GM12878 (cell line): ENCODE measurements at regions of chr2 and their contacts with region 1.

Region 1: GRCh38 chr2:177332041-177332991 is 60.3 kb upstream of the AGPS start:
- DNase-seq: peak; percentile 45
- ATAC-seq: peak; percentile 92
- H3K4me3 ChIP-seq: no peak overlapping the region
- H3K27ac ChIP-seq: no peak overlapping the region
- H3K4me1 ChIP-seq: no peaks in the 10 kb centered on the region
- H3K27me3 ChIP-seq: no peaks in the 10 kb centered on the region
- CTCF ChIP-seq: peak; percentile 55 to 79 (median 62)
- EP300 ChIP-seq: no peak
- POLR2A ChIP-seq: no peak
- RAD21 ChIP-seq: peak; percentile 90

Region 2: GRCh38 chr2:176140513-176141317 is 1191.6 kb before region 1 on chr2:
- CTCF ChIA-PET with region 1: no interaction called
- POLR2A ChIA-PET with region 1: no interaction called
- RAD21 ChIA-PET with region 1: no interaction called
- SMC1A ChIA-PET with region 1: no interaction called
- in situ Hi-C with region 1: loop called (anchors 25 kb)
- intact Hi-C with region 1: no loop called
- DNase-seq: peak; percentile 24
- ATAC-seq: peak; percentile 99
- H3K4me3 ChIP-seq: peak overlapping the region; percentile 37; the same call in 1 of the 2 replicates
- H3K27ac ChIP-seq: no peak overlapping the region
- H3K4me1 ChIP-seq: no peaks in the 10 kb centered on the region
- H3K27me3 ChIP-seq: peaks cover 0 to 11% of the 10 kb centered on the region in 2 experiments
- CTCF ChIP-seq: peak; percentile 75 to 93 (median 92)
- EP300 ChIP-seq: no peak
- POLR2A ChIP-seq: no peak; the same call in 1 of the 2 replicates
- RAD21 ChIP-seq: peak; percentile 95

Region 3: GRCh38 chr2:177263451-177264208 is 68.7 kb before region 1 on chr2:
- CTCF ChIA-PET with region 1: interaction called, 18 read pairs
- POLR2A ChIA-PET with region 1: interaction called, 10 read pairs
- RAD21 ChIA-PET with region 1: interaction called, 9 read pairs
- SMC1A ChIA-PET with region 1: interaction called, 5 read pairs
- in situ Hi-C with region 1: no loop called
- intact Hi-C with region 1: loop called (anchors 1 kb)
- DNase-seq: peak; percentile 71
- ATAC-seq: peak; percentile 74
- H3K4me3 ChIP-seq: peak overlapping the region; percentile 72
- H3K27ac ChIP-seq: peak overlapping the region; percentile 99
- H3K4me1 ChIP-seq: peaks cover 12% of the 10 kb centered on the region
- H3K27me3 ChIP-seq: no peaks in the 10 kb centered on the region
- CTCF ChIP-seq: peak; percentile 85 to 96 (median 86); a peak in 5 of 6 replicates
- EP300 ChIP-seq: peak; percentile 90 to 93
- POLR2A ChIP-seq: peak; percentile 81
- RAD21 ChIP-seq: peak; percentile 62

Region 4: DNA sequence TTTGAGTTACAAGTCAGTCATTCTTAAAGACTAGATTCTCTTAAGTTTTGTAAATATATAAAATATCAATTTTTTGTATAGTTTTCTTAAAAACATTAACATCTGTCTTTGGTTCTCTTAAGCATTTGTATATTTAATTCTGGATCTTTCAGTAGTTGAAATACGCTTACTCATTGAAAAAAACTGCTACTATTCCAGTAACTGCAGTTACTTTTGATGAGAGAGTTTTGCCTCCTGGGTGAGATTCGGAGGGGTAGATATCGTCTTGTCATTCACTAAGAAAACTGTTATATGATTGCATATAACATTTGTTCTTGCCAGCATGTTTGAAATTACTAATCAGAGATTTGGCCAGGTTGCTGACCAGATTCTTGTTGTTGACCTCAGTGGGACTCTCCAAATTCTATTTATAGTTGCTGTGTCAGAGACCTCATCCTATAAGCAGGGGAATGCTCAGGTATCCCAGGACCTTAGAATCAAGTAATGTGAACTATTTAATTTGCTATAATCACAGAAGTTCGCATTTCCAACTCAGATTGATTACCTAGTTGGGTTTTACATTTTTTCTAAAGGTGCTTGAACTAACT is 68.1 kb after region 1 on chr2:
- CTCF ChIA-PET with region 1: interaction called, 6 read pairs
- POLR2A ChIA-PET with region 1: no interaction called
- RAD21 ChIA-PET with region 1: interaction called, 8 read pairs
- SMC1A ChIA-PET with region 1: interaction called, 10 read pairs
- in situ Hi-C with region 1: no loop called
- intact Hi-C with region 1: no loop called
- DNase-seq: no peak
- ATAC-seq: peak; percentile 29
- H3K4me3 ChIP-seq: no peak overlapping the region
- H3K27ac ChIP-seq: no peak overlapping the region
- H3K4me1 ChIP-seq: peaks cover 9% of the 10 kb centered on the region
- H3K27me3 ChIP-seq: no peaks in the 10 kb centered on the region
- CTCF ChIP-seq: no peak
- EP300 ChIP-seq: no peak
- POLR2A ChIP-seq: no peak
- RAD21 ChIP-seq: no peak

Region 5: DNA sequence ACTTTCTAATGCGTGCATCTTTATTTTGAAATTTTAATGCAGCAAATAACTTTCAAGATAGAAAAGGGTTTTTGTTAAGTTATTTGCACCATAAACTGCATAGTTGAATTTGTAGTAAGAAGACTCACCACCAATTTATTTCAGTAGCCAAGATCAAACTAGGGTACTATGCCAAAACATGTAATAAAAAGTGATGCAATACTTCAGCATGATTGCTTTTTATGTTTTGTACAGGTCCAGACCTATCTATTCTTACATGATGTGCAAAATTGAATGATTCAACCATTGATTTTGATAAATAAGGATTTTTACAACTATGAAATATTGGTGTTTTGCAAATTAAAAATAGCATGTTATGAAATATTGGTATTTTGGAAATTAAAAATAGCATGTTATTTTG is 87.0 kb after region 1 on chr2:
- CTCF ChIA-PET with region 1: interaction called, 273 read pairs
- POLR2A ChIA-PET with region 1: no interaction called
- RAD21 ChIA-PET with region 1: interaction called, 100 read pairs
- SMC1A ChIA-PET with region 1: interaction called, 208 read pairs
- in situ Hi-C with region 1: loop called (anchors 5 kb)
- intact Hi-C with region 1: loop called (anchors 1 kb)
- DNase-seq: no peak
- ATAC-seq: no peak
- H3K4me3 ChIP-seq: no peak overlapping the region
- H3K27ac ChIP-seq: no peak overlapping the region
- H3K4me1 ChIP-seq: no peaks in the 10 kb centered on the region
- H3K27me3 ChIP-seq: no peaks in the 10 kb centered on the region
- CTCF ChIP-seq: no peak
- EP300 ChIP-seq: no peak
- POLR2A ChIP-seq: no peak
- RAD21 ChIP-seq: no peak

Region 6: DNA sequence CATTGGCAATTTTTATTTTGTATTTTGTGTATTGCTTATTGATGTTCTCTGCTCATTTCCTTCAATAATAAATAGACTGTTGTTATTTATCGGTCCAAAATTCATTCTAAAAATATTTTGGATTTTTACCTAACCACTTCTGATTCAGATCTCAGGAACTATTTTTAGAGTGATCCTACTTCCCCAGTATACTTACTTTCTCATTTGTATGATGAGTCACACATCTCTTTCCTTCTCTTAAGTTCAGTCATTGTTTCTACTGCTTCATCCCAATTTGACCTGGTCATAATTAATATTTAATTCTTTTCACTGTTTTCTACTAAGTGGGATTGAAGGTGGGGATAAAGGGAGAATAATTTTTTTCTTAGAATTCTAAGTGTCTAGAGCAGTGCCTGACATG is 135.3 kb after region 1 on chr2:
- CTCF ChIA-PET with region 1: no interaction called
- POLR2A ChIA-PET with region 1: no interaction called
- RAD21 ChIA-PET with region 1: no interaction called
- SMC1A ChIA-PET with region 1: no interaction called
- in situ Hi-C with region 1: no loop called
- intact Hi-C with region 1: no loop called
- DNase-seq: no peak
- ATAC-seq: no peak
- H3K4me3 ChIP-seq: no peak overlapping the region
- H3K27ac ChIP-seq: no peak overlapping the region
- H3K4me1 ChIP-seq: no peaks in the 10 kb centered on the region
- H3K27me3 ChIP-seq: no peaks in the 10 kb centered on the region
- CTCF ChIP-seq: no peak
- EP300 ChIP-seq: no peak
- POLR2A ChIP-seq: no peak
- RAD21 ChIP-seq: no peak

Region 7: DNA sequence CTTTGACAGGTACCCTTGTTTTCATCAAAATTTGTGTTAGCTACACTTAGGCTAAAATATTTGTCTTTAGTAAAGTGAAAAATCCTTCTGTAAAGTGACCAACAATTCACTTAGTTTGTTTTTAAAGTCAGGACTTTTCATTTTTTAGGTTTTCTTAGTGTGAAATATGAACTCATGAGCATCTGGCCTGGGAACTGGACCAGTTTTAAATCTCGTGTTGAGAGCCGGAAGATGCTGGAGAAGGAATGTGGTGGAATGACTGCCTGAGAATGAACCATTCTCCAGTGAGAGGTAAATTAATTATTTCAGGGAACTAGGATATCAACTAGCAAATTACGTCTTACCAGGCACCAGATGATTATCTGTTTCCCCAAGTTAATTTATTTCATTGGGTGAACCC is 366.0 kb after region 1 on chr2:
- CTCF ChIA-PET with region 1: no interaction called
- POLR2A ChIA-PET with region 1: no interaction called
- RAD21 ChIA-PET with region 1: no interaction called
- SMC1A ChIA-PET with region 1: no interaction called
- in situ Hi-C with region 1: no loop called
- intact Hi-C with region 1: no loop called
- DNase-seq: no peak
- ATAC-seq: no peak
- H3K4me3 ChIP-seq: no peak overlapping the region
- H3K27ac ChIP-seq: no peak overlapping the region
- H3K4me1 ChIP-seq: no peaks in the 10 kb centered on the region
- H3K27me3 ChIP-seq: no peaks in the 10 kb centered on the region
- CTCF ChIP-seq: no peak
- EP300 ChIP-seq: no peak
- POLR2A ChIP-seq: no peak
- RAD21 ChIP-seq: no peak

Region 8: GRCh38 chr2:177724398-177725287 is 392.3 kb after region 1 on chr2:
- CTCF ChIA-PET with region 1: interaction called, 104 read pairs
- POLR2A ChIA-PET with region 1: interaction called, 3 read pairs
- RAD21 ChIA-PET with region 1: interaction called, 20 read pairs
- SMC1A ChIA-PET with region 1: interaction called, 46 read pairs
- in situ Hi-C with region 1: loop called (anchors 5 kb)
- intact Hi-C with region 1: loop called (anchors 1 kb)
- DNase-seq: no peak
- ATAC-seq: peak; percentile 92
- H3K4me3 ChIP-seq: no peak overlapping the region
- H3K27ac ChIP-seq: no peak overlapping the region
- H3K4me1 ChIP-seq: no peaks in the 10 kb centered on the region
- H3K27me3 ChIP-seq: no peaks in the 10 kb centered on the region; a peak in 1 of 4 replicates
- CTCF ChIP-seq: peak; percentile 85 to 93 (median 90)
- EP300 ChIP-seq: no peak
- POLR2A ChIP-seq: no peak
- RAD21 ChIP-seq: peak; percentile 94